HCT116 (cell line): ENCODE measurements at regions of chr1 and their contacts with region 1.

Region 1: DNA sequence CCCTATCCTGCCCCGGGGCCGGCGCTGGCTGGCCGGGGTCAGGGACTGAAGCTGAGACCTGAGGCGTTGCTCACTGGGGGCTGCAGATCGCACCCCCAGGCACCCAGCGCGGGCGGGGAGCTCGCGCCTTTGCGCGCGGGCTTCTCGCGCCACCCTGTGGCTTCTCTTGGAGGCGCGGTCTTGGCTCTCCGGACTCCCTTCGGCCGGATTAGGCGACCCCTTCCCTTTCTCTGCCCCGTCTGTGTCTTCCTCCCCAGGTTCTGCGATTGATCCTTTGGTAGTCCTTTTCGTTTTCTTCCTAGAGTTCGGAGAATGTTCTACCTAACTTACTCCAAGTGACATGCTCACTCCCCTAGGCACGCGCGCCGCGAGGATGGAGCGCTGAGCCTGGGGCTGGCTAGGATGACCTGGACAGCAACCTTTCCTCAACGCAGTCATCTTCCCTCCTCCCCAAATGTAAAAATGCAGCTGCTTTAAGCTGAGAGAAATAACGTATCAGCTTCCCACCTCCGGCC is 495 bp upstream of the NTRK1 start:
- DNase-seq: peak; percentile 28
- ATAC-seq: peak; percentile 89
- H3K4me3 ChIP-seq: peak overlapping the region; percentile 30 to 55
- H3K27ac ChIP-seq: no peak overlapping the region
- H3K4me1 ChIP-seq: peaks cover 4 to 17% of the 10 kb centered on the region in 2 experiments; a peak in 3 of 4 replicates
- H3K27me3 ChIP-seq: peaks cover 3% of the 10 kb centered on the region; the same call in 1 of the 2 replicates
- CTCF ChIP-seq: peak; percentile 82 to 94 (median 83)
- POLR2A ChIP-seq: no peak
- RAD21 ChIP-seq: peak; percentile 96

Region 2: DNA sequence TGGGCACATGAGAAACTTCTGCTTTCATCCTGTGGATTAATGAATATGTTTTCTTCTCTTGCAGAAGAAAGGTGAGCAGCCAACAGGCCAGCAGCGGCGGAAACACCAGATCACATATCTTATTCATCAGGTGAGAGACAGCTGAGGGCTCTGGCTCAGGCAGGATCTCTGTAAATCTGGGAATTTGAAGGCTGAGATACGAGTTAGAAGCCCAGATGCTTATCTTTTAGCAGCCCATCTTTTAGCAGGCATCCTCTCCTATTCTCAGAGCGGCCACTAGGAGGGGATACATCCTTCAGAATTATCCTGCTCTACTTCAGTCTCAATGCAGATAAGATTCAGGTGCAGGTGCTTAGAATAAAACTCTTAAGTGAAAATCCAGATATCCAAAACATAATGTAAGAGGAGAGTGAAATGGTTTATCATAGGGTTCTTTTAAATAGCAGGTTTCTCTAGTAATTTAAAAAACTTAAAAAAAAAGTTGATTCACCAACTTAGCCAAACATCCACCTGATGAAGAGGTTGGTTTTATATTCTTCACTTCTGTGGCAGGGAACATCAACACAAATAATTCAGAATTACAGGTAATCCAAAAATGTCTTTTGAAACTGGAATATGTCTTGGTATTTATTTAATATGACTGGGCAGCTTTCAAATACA is 62.8 kb before region 1 on chr1:
- CTCF ChIA-PET with region 1: interaction called, 6 read pairs
- POLR2A ChIA-PET with region 1: no interaction called
- RAD21 ChIA-PET with region 1: no interaction called
- intact Hi-C with region 1: loop called (anchors 1 kb)
- DNase-seq: peak; percentile 33
- ATAC-seq: peak; percentile 84
- H3K4me3 ChIP-seq: no peak overlapping the region
- H3K27ac ChIP-seq: no peak overlapping the region
- H3K4me1 ChIP-seq: peaks cover 2 to 8% of the 10 kb centered on the region in 2 experiments; a peak in 2 of 4 replicates
- H3K27me3 ChIP-seq: no peaks in the 10 kb centered on the region
- CTCF ChIP-seq: peak; percentile 65 to 91 (median 82); a peak in 5 of 6 replicates
- POLR2A ChIP-seq: no peak
- RAD21 ChIP-seq: peak; percentile 74

Region 3: GRCh38 chr1:156838981-156839410 is 21.2 kb before region 1 on chr1:
- CTCF ChIA-PET with region 1: interaction called, 44 read pairs
- POLR2A ChIA-PET with region 1: no interaction called
- RAD21 ChIA-PET with region 1: no interaction called
- intact Hi-C with region 1: no loop called
- DNase-seq: no peak
- ATAC-seq: peak; percentile 86
- H3K4me3 ChIP-seq: no peak overlapping the region
- H3K27ac ChIP-seq: no peak overlapping the region
- H3K4me1 ChIP-seq: no peaks in the 10 kb centered on the region
- H3K27me3 ChIP-seq: peaks cover 5% of the 10 kb centered on the region; the same call in 1 of the 2 replicates
- CTCF ChIP-seq: peak; percentile 72 to 98 (median 95); a peak in 5 of 6 replicates
- POLR2A ChIP-seq: no peak
- RAD21 ChIP-seq: peak; percentile 83

Region 4: GRCh38 chr1:156882543-156882942 is 22.4 kb after region 1 on chr1:
- CTCF ChIA-PET with region 1: no interaction called
- POLR2A ChIA-PET with region 1: no interaction called
- RAD21 ChIA-PET with region 1: no interaction called
- intact Hi-C with region 1: no loop called
- DNase-seq: no peak
- ATAC-seq: peak; percentile 20; the same call in 1 of the 2 replicates
- H3K4me3 ChIP-seq: no peak overlapping the region
- H3K27ac ChIP-seq: no peak overlapping the region
- H3K4me1 ChIP-seq: peaks cover 0 to 7% of the 10 kb centered on the region in 2 experiments; a peak in 1 of 4 replicates
- H3K27me3 ChIP-seq: 0 out of 2 replicates have a peak, but pooled peaks cover 3% of the 10 kb centered on the region
- CTCF ChIP-seq: no peak
- POLR2A ChIP-seq: no peak
- RAD21 ChIP-seq: no peak

Region 5: GRCh38 chr1:156896490-156897033 is 36.4 kb after region 1 on chr1:
- CTCF ChIA-PET with region 1: no interaction called
- POLR2A ChIA-PET with region 1: no interaction called
- RAD21 ChIA-PET with region 1: no interaction called
- intact Hi-C with region 1: no loop called
- DNase-seq: peak; percentile 46
- ATAC-seq: peak; percentile 80
- H3K4me3 ChIP-seq: peak overlapping the region; percentile 6 to 48; a peak in 3 of 4 replicates
- H3K27ac ChIP-seq: peak overlapping the region; percentile 88
- H3K4me1 ChIP-seq: peaks cover 32 to 63% of the 10 kb centered on the region in 2 experiments
- H3K27me3 ChIP-seq: no peaks in the 10 kb centered on the region
- CTCF ChIP-seq: no peak
- POLR2A ChIP-seq: no peak
- RAD21 ChIP-seq: no peak